Astrocyte of the cerebellum (primary cell): ENCODE measurements at regions of chr16 and their contacts with region 1.

Region 1: GRCh38 chr16:67326472-67327309 is at the starts of genes KCTD19 and LRRC36:
- DNase-seq: peak; percentile 5
- H3K4me3 ChIP-seq: peak within 1 kb of the TSS; percentile 53
- CTCF ChIP-seq: peak; percentile 50

Region 2: DNA sequence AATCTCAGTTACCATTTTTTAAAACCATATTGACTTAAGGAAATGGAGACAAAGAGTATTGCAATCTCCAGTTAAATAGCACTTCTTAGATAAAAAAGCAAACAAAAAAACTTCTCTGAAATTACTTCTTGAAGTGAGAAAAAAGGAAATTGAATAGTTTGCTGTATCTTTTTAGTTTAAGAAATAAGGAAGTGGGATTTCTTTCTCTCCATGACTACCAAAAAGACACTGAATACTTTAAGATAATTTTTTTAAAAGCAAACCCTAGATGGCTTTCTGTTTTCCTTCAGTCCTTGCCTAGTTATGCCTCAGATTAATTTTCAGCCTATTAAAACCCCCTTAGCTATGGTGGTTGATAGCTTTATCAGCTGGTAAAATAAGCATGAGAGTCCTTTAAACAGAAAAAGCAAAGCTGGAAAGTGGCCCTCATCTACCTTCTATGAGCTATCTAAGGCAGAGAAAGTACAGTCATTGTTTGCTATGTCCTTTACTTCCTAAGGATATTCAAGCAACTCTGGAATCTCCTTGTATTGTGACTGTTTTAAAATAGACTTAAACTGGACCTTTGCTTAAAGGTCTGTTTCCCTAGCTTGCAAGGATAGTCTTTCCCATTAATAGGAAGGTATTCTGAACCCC is 38.0 kb after region 1 on chr16:
- in situ Hi-C with region 1: loop called (anchors 5 kb)
- DNase-seq: no peak
- H3K4me3 ChIP-seq: no peak overlapping the region
- CTCF ChIP-seq: no peak

Region 3: DNA sequence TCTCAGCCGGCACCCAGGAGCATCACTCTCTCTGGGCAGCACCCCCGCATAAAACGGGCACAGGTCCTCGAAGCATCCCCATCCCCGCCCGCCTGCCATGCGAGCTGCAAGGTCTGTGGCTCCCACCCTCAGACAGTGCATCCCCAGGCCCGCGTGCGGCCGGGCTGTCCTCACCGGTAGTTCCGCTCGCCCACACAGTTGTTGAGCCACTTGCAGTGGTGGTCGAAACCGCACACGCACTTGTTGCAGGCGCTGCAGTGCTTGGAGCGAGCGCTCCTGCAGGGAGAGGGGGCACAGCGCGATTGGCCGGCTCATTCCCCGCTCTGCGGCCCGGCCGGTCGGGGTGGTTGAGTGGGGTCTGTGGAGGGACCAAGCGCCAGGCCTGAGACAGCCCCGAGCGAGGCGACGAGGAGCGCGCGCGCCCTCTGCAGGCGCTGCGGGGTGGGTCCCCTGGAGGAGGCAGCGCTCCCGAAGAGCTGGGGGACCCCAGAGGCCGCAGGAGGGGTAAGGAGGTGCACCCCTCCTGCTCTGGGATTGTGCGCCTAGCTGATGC is 72.6 kb after region 1 on chr16:
- in situ Hi-C with region 1: loop called (anchors 5 kb)
- DNase-seq: no peak
- H3K4me3 ChIP-seq: no peak overlapping the region
- CTCF ChIP-seq: peak; percentile 84